ENCODE measurements at regions of chr2 and their contacts with region 1.

Region 1: DNA sequence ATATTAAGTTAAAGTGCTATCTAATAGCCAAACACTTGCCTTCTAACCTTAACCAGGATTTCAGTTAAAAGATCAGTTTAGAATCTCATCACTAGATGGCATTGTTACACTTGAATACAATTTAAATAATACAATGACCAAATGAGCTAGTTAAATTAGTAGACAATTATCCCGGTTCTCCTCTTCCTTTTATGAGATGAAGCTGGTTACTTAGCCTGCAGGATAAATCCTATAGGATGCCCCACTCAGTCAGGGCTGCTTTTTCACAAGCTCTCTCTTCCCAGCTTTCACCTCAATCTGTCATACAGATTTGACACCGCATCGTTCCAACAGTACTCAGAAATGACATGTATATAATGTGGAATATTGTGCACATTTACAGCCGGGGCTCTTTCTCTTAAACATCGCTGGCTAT is 678.8 kb downstream of the KCNJ3 start:
- H3K4me3 Mint-ChIP-seq: no peak overlapping the region
- H3K27ac Mint-ChIP-seq: no peak overlapping the region
- H3K4me1 Mint-ChIP-seq: no peaks in the 10 kb centered on the region
- H3K27me3 Mint-ChIP-seq: no peaks in the 10 kb centered on the region

Region 2: DNA sequence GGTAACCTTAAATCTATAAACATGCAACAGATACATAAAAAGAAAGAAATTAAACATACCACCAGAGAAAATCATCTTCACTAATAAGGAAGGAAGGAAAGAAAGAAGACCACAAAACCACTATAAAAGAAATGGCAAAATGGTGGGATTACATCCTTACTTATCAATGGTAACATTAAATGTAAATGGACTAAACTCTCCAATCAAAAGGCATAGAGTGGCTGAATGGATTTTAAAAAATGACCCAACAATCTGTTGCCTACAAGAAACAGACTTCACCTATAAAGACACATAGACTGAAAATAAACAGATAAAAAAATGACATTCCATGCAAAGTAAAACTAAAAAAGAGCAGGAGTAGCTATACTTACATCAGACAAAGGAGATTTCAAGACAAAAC is 1310.1 kb before region 1 on chr2:
- intact Hi-C with region 1: no loop called
- H3K4me3 Mint-ChIP-seq: no peak overlapping the region
- H3K27ac Mint-ChIP-seq: no peak overlapping the region
- H3K4me1 Mint-ChIP-seq: no peaks in the 10 kb centered on the region
- H3K27me3 Mint-ChIP-seq: no peaks in the 10 kb centered on the region

Region 3: GRCh38 chr2:155815886-155816285 is 438.6 kb after region 1 on chr2:
- intact Hi-C with region 1: loop called (anchors 1 kb)
- H3K4me3 Mint-ChIP-seq: no peak overlapping the region
- H3K27ac Mint-ChIP-seq: no peak overlapping the region
- H3K4me1 Mint-ChIP-seq: no peaks in the 10 kb centered on the region
- H3K27me3 Mint-ChIP-seq: no peaks in the 10 kb centered on the region

Region 4: DNA sequence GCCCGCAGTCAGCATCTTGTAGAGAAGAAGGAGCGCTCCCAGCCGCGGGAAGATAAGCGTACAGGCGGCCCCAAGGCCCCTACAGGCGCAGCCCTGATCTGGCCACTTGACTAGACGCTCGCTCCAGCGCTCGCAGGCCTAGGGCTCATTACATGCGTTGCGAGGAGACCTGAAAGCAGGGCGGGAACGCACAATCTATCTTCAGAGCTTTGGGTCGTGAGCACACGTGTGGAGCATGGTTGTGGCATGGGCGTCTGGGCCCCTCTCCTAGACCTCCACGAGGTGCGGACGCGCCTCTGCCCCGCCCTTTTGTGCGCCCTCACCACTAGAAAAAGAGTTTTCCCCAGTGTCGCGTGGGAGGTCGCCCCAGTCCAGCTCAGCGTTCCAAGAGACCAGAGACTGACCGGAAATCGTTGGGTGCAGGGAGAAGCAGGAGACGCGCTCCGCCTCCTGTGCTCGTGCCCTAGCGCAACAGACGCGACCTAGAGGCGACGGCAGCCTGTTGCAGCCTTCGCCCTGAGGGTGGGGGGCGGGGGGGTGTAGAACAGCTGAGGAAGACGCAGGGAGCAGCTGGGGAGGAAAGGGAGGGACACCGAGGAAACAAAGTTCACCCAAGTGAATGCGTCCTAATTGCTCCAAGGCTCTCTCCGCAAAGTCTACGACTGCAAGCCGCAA is 942.7 kb after region 1 on chr2:
- intact Hi-C with region 1: loop called (anchors 10 kb)
- H3K4me3 Mint-ChIP-seq: peak overlapping the region; percentile 53
- H3K27ac Mint-ChIP-seq: no peak overlapping the region
- H3K4me1 Mint-ChIP-seq: peaks cover 38% of the 10 kb centered on the region
- H3K27me3 Mint-ChIP-seq: peaks cover 80% of the 10 kb centered on the region

Region 5: GRCh38 chr2:156589381-156590079 is 1212.3 kb after region 1 on chr2:
- intact Hi-C with region 1: loop called (anchors 5 kb)
- H3K4me3 Mint-ChIP-seq: no peak overlapping the region
- H3K27ac Mint-ChIP-seq: no peak overlapping the region
- H3K4me1 Mint-ChIP-seq: no peaks in the 10 kb centered on the region
- H3K27me3 Mint-ChIP-seq: no peaks in the 10 kb centered on the region

Region 6: DNA sequence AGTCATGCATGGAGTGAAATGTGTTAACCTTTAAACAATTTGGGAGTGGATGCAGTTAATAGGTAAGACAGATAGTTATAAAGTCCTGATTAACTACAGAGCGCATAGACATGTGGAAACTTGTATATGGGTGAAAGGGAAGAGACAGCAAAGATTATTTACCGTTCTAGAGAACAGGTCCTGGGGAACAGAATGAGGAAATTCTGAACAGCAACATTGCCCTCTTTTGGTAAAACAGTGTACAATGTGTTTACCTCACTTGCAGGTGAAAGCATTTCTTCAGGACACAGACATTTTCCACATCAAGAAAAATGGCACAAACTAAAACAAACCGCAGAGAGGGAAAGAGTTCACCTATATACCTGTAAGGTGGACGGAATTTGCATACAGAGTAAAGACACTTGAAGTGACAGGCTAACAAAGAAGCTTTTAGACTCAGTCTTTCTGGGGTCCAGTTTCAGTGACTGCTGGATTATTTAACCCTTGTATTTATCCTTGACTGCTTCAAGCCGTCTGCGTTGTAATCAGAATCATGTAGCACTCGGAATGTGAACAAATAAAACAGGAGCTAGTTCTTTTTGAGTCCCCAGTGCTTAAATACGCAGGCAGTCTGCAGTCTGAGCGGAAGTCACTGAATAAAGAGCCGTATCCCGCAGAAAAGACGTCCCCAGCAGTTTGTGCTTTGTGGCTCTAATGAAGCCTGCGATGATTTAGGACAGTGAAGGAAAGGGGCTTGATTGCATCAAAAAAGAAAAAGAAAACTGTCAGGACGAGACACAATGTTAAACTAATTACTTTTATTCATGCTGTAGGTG is 1515.4 kb after region 1 on chr2:
- intact Hi-C with region 1: loop called (anchors 10 kb)
- H3K4me3 Mint-ChIP-seq: no peak overlapping the region
- H3K27ac Mint-ChIP-seq: no peak overlapping the region
- H3K4me1 Mint-ChIP-seq: no peaks in the 10 kb centered on the region
- H3K27me3 Mint-ChIP-seq: peaks cover 8% of the 10 kb centered on the region

Region 7: DNA sequence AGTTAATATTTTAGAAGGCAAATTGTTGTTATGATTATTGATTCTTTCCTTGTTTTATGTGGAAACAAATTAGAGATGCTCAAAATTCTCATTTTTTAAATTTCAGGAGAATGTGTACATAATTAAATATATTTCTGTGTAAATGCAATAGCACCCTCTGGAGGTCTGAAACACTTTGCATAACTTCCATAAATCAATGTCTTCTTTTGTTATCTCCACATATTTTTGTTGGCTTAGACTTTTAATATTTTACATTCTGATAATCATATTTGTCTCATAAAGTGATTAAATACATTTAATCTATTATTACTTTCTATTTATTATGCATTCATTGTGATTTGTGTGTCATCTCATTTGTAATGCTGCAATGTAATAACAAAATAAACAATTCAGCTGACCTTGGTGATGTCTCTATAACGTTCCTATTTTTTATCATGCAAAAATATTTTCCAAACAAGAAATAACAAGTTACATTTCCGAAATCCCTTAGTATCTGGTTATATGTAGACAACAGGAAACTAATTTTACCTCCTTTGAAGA is 1678.5 kb after region 1 on chr2:
- intact Hi-C with region 1: loop called (anchors 10 kb)
- H3K4me3 Mint-ChIP-seq: no peak overlapping the region
- H3K27ac Mint-ChIP-seq: no peak overlapping the region
- H3K4me1 Mint-ChIP-seq: no peaks in the 10 kb centered on the region
- H3K27me3 Mint-ChIP-seq: no peaks in the 10 kb centered on the region

Region 8: DNA sequence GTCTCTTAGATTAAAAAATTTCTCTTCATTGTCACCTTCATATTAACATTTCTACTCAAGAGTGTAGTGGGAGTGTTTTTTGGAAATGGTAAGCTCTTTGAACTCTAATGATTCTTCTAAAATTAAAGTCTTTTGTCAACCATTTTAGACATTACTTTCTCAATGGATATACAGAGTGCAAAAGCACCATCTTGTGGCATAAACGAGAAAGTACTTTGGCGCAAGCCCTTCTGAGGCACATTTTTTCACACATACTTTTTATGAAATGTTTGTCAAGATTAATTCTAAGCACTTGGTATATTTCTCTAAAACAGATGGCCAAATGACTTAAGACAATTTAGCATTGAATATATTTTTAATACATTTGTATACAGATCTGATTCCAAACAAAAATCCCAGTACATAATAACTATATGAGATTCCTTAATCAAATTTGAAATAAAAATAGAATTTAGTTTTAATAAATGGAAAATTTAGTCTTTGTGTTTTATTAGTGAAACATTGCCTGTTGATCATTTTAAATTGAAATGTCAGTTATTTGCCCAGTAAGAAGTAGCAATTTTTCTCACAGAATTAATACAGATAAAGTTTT is 1816.9 kb after region 1 on chr2:
- intact Hi-C with region 1: loop called (anchors 1 kb)
- H3K4me3 Mint-ChIP-seq: no peak overlapping the region
- H3K27ac Mint-ChIP-seq: no peak overlapping the region
- H3K4me1 Mint-ChIP-seq: peaks cover 9% of the 10 kb centered on the region
- H3K27me3 Mint-ChIP-seq: no peaks in the 10 kb centered on the region

Measured in dendritic cell treated with granulocyte-macrophage colony-stimulating factor and Interleukin-4, amounts not matched to agents 40 ng/mL and 50 ng/mL, for 4 days (primary cell).